T-cell (primary cell): ENCODE measurements at regions of chr2 and their contacts with region 1.

Region 1: DNA sequence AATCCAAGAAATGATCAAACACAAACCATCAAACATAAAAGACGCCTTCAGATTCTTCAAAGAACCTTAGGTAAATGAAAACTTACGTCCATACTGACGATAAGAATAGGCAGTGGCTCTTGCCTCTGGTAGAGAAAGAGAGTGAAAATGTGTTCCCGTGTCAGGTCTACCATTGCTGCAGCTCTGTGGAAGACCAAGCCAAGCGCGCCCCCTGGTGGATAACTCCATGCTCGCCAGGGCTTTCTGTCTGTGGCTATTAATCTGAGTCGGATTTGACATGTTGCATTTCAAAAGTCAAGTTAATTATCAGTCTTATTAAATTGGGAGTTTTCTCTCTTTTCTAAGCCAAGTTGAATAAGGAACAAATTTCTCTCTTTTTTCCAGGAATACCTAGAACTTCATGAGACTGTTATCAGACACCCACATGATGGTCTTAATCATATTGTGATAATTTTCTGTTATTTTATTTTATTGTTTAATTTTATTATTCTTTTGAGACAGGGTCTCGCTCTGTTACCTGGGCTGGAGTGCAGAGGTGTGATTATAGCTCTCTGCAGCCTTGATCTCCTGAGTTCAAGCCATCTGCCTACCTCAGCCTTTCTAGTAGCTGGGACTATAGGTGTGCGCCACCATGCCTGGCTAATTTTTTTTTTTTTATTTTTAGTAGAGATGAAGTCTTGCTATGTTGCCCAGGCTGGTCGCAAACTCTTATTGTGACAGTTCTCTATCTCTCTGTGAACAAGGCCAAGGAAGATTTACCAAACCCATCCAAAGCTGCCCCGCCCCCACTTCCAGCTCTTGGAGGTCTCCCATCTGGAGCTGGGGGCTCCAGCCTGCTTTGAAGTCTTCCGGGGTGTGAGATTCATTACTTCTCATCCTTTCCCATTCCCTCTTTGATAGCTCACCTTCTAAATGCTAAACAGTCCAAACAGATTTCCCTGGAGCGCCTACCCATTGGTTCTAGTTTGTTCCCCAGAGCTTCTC is 15.8 kb upstream of the ZAP70 start:
- DNase-seq: peak; percentile 75 to 96 (median 91)
- ATAC-seq: peak; percentile 90 to 94 (median 92)
- H3K4me3 ChIP-seq: no peak overlapping the region
- H3K4me3 Mint-ChIP-seq: peak overlapping the region in 1 of 3 donors; percentile 14
- H3K27ac ChIP-seq: no peak overlapping the region
- H3K27ac Mint-ChIP-seq: peak overlapping the region in 1 of 2 donors; percentile 8
- H3K4me1 ChIP-seq: no peaks in the 10 kb centered on the region
- H3K4me1 Mint-ChIP-seq: peaks cover 9 to 11% (median 9%) of the 10 kb centered on the region in 3 donors
- H3K27me3 ChIP-seq: no peaks in the 10 kb centered on the region
- H3K27me3 Mint-ChIP-seq: no peaks in the 10 kb centered on the region

Region 2: GRCh38 chr2:97617911-97618310 is 79.6 kb before region 1 on chr2:
- CTCF ChIA-PET with region 1: no interaction called
- POLR2A ChIA-PET with region 1: no interaction called
- DNase-seq: no peak
- ATAC-seq: no peak
- H3K4me3 ChIP-seq: no peak overlapping the region
- H3K4me3 Mint-ChIP-seq: no peak overlapping the region
- H3K27ac ChIP-seq: no peak overlapping the region
- H3K27ac Mint-ChIP-seq: no peak overlapping the region
- H3K4me1 ChIP-seq: no peaks in the 10 kb centered on the region
- H3K4me1 Mint-ChIP-seq: no peaks in the 10 kb centered on the region
- H3K27me3 ChIP-seq: no peaks in the 10 kb centered on the region
- H3K27me3 Mint-ChIP-seq: no peaks in the 10 kb centered on the region

Region 3: DNA sequence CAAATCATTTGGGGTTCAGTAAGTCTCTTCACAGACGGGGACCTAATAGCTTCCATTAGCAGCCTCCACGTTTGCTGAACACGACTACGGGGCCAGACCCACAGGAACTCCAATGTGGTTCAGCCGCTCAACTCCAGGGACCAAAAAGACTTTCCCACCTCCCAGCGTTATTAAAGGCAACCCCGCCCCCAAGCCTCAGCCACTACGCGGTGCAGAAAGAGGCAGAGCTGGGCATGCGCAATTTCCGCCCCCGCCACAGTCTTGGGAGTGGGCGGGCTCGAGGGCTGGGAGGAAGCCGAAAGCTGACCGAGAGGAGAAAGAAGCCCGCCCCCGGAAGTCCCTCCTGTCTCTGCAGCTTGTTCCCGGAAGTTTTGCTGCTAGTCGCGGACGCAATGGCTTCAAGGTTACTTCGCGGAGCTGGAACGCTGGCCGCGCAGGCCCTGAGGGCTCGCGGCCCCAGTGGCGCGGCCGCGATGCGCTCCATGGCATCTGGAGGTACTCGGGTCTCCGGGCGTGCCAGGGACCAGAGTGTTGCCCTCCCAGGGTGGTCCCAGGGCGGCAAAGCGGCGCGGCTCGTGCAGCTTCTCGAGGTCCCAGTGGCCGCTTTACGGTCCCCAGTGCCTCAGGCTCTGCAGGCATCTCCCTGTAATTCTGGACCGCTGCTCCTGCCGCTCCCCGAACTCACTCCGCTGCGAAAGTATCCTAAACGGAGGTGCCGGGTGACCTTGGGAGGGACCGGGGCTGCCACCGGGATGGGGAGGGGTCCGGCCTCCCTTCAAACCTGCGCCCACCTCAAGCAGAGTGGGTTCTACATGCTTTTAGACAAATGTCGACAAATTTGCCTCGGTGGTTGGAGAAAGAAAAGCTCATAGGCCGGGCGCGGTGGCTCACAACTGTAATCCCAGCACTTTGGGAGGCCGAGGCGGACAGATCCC is 51.6 kb before region 1 on chr2 and contains the start of gene COX5B:
- CTCF ChIA-PET with region 1: interaction called, 3 to 13 read pairs
- POLR2A ChIA-PET with region 1: no interaction called
- DNase-seq: peak; percentile 94 to 99 (median 98)
- ATAC-seq: peak; percentile 96 to 99 (median 98)
- H3K4me3 ChIP-seq: peak within 1 kb of the TSS; percentile 81 to 93
- H3K4me3 Mint-ChIP-seq: peak within 1 kb of the TSS; percentile 90 to 93 (median 93)
- H3K27ac ChIP-seq: peak within 1 kb of the TSS; percentile 76
- H3K27ac Mint-ChIP-seq: peak within 1 kb of the TSS; percentile 98
- H3K4me1 ChIP-seq: peaks cover 5 to 24% of the 10 kb centered on the region in 2 experiments
- H3K4me1 Mint-ChIP-seq: peaks cover 20 to 33% (median 24%) of the 10 kb centered on the region in 3 donors
- H3K27me3 ChIP-seq: no peaks in the 10 kb centered on the region
- H3K27me3 Mint-ChIP-seq: no peaks in the 10 kb centered on the region
- total RNA-seq, gene COX5B: 108 to 142 (median 119) TPM

Region 4: DNA sequence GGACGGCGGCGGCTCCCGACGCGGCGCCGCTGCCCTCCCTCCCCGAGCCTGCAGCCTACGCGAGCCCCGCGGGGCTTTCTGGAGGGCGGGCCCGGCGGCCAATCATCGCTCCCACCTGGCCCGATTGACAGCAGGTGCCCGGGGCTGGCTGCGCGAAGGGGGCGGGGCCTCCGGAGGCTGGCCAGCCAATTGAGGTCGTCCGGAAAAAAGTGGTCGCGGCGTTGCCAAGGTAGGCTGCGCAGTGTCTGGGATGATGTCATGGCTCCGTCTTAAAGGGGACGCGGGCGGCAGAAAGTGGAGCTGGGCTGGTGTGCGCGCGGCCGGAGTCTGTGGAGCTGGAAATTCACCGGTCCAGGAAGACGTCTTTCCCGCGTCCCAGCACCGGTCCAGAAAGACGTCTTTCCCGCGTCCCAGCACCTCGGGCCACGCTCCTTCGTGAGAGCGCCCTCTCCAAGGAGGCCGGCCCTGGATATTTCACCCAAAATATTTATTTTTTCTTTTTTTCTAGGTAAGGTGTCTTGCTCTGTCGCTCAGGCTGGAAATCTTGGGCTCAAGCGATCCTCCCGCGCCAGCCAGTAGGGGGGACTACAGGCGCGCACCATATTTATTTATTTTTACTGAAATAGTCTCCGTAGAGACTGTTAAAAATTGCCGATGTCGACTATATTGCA is 33.4 kb before region 1 on chr2 and contains the start of gene ACTR1B:
- CTCF ChIA-PET with region 1: interaction called, 7 to 16 read pairs
- POLR2A ChIA-PET with region 1: interaction called in 1 of 2 experiments, 7 read pairs
- DNase-seq: peak; percentile 89 to 99 (median 97)
- ATAC-seq: peak; percentile 88 to 95 (median 92)
- H3K4me3 ChIP-seq: peak within 1 kb of the TSS; percentile 67 to 92
- H3K4me3 Mint-ChIP-seq: peak within 1 kb of the TSS; percentile 90 to 95 (median 95)
- H3K27ac ChIP-seq: peak within 1 kb of the TSS; percentile 96
- H3K27ac Mint-ChIP-seq: peak within 1 kb of the TSS; percentile 95 to 98
- H3K4me1 ChIP-seq: peaks cover 6 to 40% of the 10 kb centered on the region in 2 experiments
- H3K4me1 Mint-ChIP-seq: peaks cover 32 to 35% (median 32%) of the 10 kb centered on the region in 3 donors
- H3K27me3 ChIP-seq: no peaks in the 10 kb centered on the region
- H3K27me3 Mint-ChIP-seq: no peaks in the 10 kb centered on the region
- total RNA-seq, gene ACTR1B: 86.3 to 124 (median 101) TPM

Region 5: DNA sequence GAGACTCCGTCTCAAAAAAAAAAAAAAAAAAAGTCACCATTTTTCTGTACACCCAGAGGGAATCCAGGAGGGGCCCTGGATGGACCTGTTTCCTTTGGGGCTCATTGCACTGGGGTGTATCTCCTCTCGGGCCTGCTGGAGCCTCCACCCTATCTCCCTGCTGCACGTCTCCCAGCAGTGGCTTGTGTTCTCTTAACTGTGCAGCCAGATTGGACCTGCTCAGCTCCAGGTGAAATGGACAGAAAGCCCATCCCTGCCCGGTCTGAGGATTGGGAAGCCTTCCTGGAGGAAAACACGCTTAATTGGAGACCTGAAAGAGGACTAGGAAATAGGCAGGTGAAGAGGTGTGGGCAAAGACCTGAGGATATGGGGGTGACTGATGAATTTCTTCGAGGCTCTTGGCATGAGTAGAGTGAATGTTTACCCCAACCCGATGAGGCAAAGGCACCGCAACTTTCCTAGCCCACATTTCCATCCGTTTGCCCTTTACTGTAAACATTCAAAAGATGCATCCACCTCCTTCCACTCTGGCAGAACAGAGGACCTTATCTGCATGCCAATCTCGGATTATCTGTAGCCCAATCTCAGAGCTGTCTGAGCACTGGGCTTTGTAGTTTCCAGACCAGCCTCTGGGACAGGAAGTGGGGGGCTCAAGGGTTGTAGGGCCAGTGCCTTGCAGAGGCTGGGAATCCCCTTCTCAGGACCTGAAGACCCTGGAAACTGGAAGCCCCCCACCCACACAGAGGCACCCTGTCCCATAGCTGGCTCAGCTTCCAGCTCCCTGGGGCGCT is 13.2 kb after region 1 on chr2:
- CTCF ChIA-PET with region 1: interaction called, 5 to 14 read pairs
- POLR2A ChIA-PET with region 1: no interaction called
- DNase-seq: peak in 1 of 35 experiments; percentile 41
- ATAC-seq: no peak
- H3K4me3 ChIP-seq: no peak overlapping the region
- H3K4me3 Mint-ChIP-seq: peak overlapping the region in 1 of 3 donors; percentile 63
- H3K27ac ChIP-seq: peak overlapping the region; percentile 26
- H3K27ac Mint-ChIP-seq: peak overlapping the region; percentile 100
- H3K4me1 ChIP-seq: peaks cover 28 to 57% of the 10 kb centered on the region in 2 experiments
- H3K4me1 Mint-ChIP-seq: peaks cover 51 to 63% (median 58%) of the 10 kb centered on the region in 3 donors
- H3K27me3 ChIP-seq: peaks cover 0 to 12% of the 10 kb centered on the region in 2 experiments
- H3K27me3 Mint-ChIP-seq: no peaks in the 10 kb centered on the region

Region 6: GRCh38 chr2:97745474-97746174 is 48.1 kb after region 1 on chr2:
- CTCF ChIA-PET with region 1: interaction called, 11 to 12 read pairs
- POLR2A ChIA-PET with region 1: no interaction called
- DNase-seq: peak in 31 of 35 experiments; percentile 19 to 71 (median 37)
- ATAC-seq: peak; percentile 46 to 71 (median 66)
- H3K4me3 ChIP-seq: no peak overlapping the region
- H3K4me3 Mint-ChIP-seq: peak overlapping the region; percentile 7 to 44 (median 8)
- H3K27ac ChIP-seq: peak overlapping the region; percentile 50
- H3K27ac Mint-ChIP-seq: peak overlapping the region; percentile 67 to 84
- H3K4me1 ChIP-seq: peaks cover 11 to 69% of the 10 kb centered on the region in 2 experiments
- H3K4me1 Mint-ChIP-seq: peaks cover 73 to 79% (median 74%) of the 10 kb centered on the region in 3 donors
- H3K27me3 ChIP-seq: no peaks in the 10 kb centered on the region
- H3K27me3 Mint-ChIP-seq: no peaks in the 10 kb centered on the region